ENCODE measurements at regions of chr21 and their contacts with region 1.

Region 1: GRCh38 chr21:35840197-35840799 is 220.0 kb downstream of the SETD4 start:
- DNase-seq: peak; percentile 32 to 39
- H3K4me3 ChIP-seq: no peak overlapping the region
- H3K27ac ChIP-seq: no peak overlapping the region
- H3K4me1 ChIP-seq: no peaks in the 10 kb centered on the region
- H3K27me3 ChIP-seq: no peaks in the 10 kb centered on the region
- CTCF ChIP-seq: peak; percentile 83

Region 2: GRCh38 chr21:34693192-34693810 is 1147.0 kb before region 1 on chr21:
- CTCF ChIA-PET with region 1: no interaction called
- POLR2A ChIA-PET with region 1: no interaction called
- intact Hi-C with region 1: loop called (anchors 5 kb)
- DNase-seq: peak; percentile 39
- H3K4me3 ChIP-seq: no peak overlapping the region
- H3K27ac ChIP-seq: 0 out of 2 replicates have a peak overlapping the region, but pooled peaks have one; percentile 89
- H3K4me1 ChIP-seq: peaks cover 38% of the 10 kb centered on the region
- H3K27me3 ChIP-seq: no peaks in the 10 kb centered on the region
- CTCF ChIP-seq: peak; percentile 86

Region 3: DNA sequence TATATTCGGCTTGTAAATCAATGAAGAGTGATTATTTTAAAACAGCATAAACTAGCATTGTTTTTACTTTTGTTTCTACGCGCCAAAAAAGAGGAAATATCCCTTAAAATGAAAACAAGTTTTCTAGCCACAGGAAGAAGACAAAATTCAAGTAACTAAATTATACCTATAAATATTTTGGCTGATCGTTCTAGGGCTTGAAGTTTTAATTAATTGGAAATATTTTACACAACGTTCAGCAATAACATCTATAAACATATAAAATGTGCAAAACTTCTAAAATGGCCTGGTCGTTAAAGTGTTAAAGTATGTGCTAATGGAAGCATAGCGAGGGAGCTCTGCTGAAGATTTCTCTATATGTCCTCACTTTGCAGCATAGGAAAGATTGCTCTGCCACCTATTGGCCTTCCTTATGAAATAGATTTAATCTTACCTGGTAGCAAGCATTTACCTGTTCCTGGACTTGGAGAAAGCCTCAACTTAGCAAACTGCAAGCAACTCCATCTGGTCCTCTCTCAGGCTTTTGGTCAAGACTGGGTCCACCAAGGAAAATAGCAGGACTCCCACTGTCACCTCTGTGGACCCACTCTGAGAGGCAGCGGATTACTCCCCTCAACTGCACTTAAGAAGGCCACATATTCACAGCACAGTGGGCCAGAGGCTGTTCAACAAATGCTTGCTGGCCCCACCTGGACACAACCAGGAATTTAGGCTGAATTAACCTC is 439.9 kb before region 1 on chr21:
- CTCF ChIA-PET with region 1: interaction called, 4 read pairs
- POLR2A ChIA-PET with region 1: no interaction called
- intact Hi-C with region 1: loop called (anchors 5 kb)
- DNase-seq: peak; percentile 19 to 77
- H3K4me3 ChIP-seq: no peak overlapping the region
- H3K27ac ChIP-seq: peak overlapping the region; percentile 52
- H3K4me1 ChIP-seq: peaks cover 32% of the 10 kb centered on the region
- H3K27me3 ChIP-seq: no peaks in the 10 kb centered on the region
- CTCF ChIP-seq: peak; percentile 68

Region 4: GRCh38 chr21:35850542-35851103 is 10.3 kb after region 1 on chr21:
- CTCF ChIA-PET with region 1: no interaction called
- POLR2A ChIA-PET with region 1: no interaction called
- intact Hi-C with region 1: no loop called
- DNase-seq: no peak
- H3K4me3 ChIP-seq: no peak overlapping the region
- H3K27ac ChIP-seq: no peak overlapping the region
- H3K4me1 ChIP-seq: no peaks in the 10 kb centered on the region
- H3K27me3 ChIP-seq: 0 out of 2 replicates have a peak, but pooled peaks cover 3% of the 10 kb centered on the region
- CTCF ChIP-seq: no peak

Region 5: GRCh38 chr21:35932232-35932911 is 92.1 kb after region 1 on chr21:
- CTCF ChIA-PET with region 1: no interaction called
- POLR2A ChIA-PET with region 1: interaction called, 8 read pairs
- intact Hi-C with region 1: loop called (anchors 10 kb)
- DNase-seq: peak; percentile 19 to 68
- H3K4me3 ChIP-seq: no peak overlapping the region
- H3K27ac ChIP-seq: peak overlapping the region; percentile 52
- H3K4me1 ChIP-seq: peaks cover 14% of the 10 kb centered on the region; the same call in 1 of the 2 replicates
- H3K27me3 ChIP-seq: no peaks in the 10 kb centered on the region
- CTCF ChIP-seq: no peak

Region 6: GRCh38 chr21:36028127-36029069 is 188.1 kb after region 1 on chr21:
- CTCF ChIA-PET with region 1: no interaction called
- POLR2A ChIA-PET with region 1: no interaction called
- intact Hi-C with region 1: loop called (anchors 5 kb)
- DNase-seq: peak; percentile 44 to 67
- H3K4me3 ChIP-seq: no peak overlapping the region
- H3K27ac ChIP-seq: no peak overlapping the region
- H3K4me1 ChIP-seq: no peaks in the 10 kb centered on the region
- H3K27me3 ChIP-seq: no peaks in the 10 kb centered on the region
- CTCF ChIP-seq: peak; percentile 83

Region 7: GRCh38 chr21:36676039-36676950 is 836.0 kb after region 1 on chr21:
- CTCF ChIA-PET with region 1: no interaction called
- POLR2A ChIA-PET with region 1: no interaction called
- intact Hi-C with region 1: no loop called
- DNase-seq: peak in 1 of 2 experiments; percentile 89
- H3K4me3 ChIP-seq: peak overlapping the region; percentile 9; the same call in 1 of the 2 replicates
- H3K27ac ChIP-seq: peak overlapping the region; percentile 65
- H3K4me1 ChIP-seq: peaks cover 36% of the 10 kb centered on the region
- H3K27me3 ChIP-seq: no peaks in the 10 kb centered on the region
- CTCF ChIP-seq: no peak